ENCODE measurements at regions of chr22 and their contacts with region 1.

Region 1: GRCh38 chr22:25057013-25057881 is 104.7 kb downstream of the KIAA1671 start:
- DNase-seq: peak; percentile 90
- H3K4me3 Mint-ChIP-seq: no peak overlapping the region
- H3K27ac Mint-ChIP-seq: no peak overlapping the region
- H3K4me1 Mint-ChIP-seq: peaks cover 58% of the 10 kb centered on the region
- H3K27me3 Mint-ChIP-seq: peaks cover 3% of the 10 kb centered on the region

Region 2: GRCh38 chr22:24805790-24806662 is 251.2 kb before region 1 on chr22 and contains the start of gene SGSM1:
- CTCF ChIA-PET with region 1: interaction called, 3 read pairs
- POLR2A ChIA-PET with region 1: no interaction called
- intact Hi-C with region 1: loop called (anchors 10 kb)
- DNase-seq: peak; percentile 85
- H3K4me3 Mint-ChIP-seq: peak within 1 kb of the TSS; percentile 66
- H3K27ac Mint-ChIP-seq: no peak within 1 kb of the TSS
- H3K4me1 Mint-ChIP-seq: peaks cover 47% of the 10 kb centered on the region
- H3K27me3 Mint-ChIP-seq: no peaks in the 10 kb centered on the region
- total RNA-seq, gene SGSM1: 0.29 to 0.38 TPM

Region 3: GRCh38 chr22:24994070-24994763 is 63.0 kb before region 1 on chr22:
- CTCF ChIA-PET with region 1: interaction called, 3 read pairs
- POLR2A ChIA-PET with region 1: no interaction called
- intact Hi-C with region 1: loop called (anchors 1 kb)
- DNase-seq: peak; percentile 78
- H3K4me3 Mint-ChIP-seq: no peak overlapping the region
- H3K27ac Mint-ChIP-seq: peak overlapping the region; percentile 56
- H3K4me1 Mint-ChIP-seq: peaks cover 15% of the 10 kb centered on the region
- H3K27me3 Mint-ChIP-seq: peaks cover 26% of the 10 kb centered on the region

Region 4: GRCh38 chr22:25025491-25026400 is 31.5 kb before region 1 on chr22:
- CTCF ChIA-PET with region 1: no interaction called
- POLR2A ChIA-PET with region 1: no interaction called
- intact Hi-C with region 1: no loop called
- DNase-seq: peak; percentile 37
- H3K4me3 Mint-ChIP-seq: no peak overlapping the region
- H3K27ac Mint-ChIP-seq: no peak overlapping the region
- H3K4me1 Mint-ChIP-seq: peaks cover 15% of the 10 kb centered on the region
- H3K27me3 Mint-ChIP-seq: peaks cover 3% of the 10 kb centered on the region

Region 5: GRCh38 chr22:25076336-25076735 is 19.1 kb after region 1 on chr22:
- CTCF ChIA-PET with region 1: interaction called, 40 read pairs
- POLR2A ChIA-PET with region 1: interaction called, 10 read pairs
- intact Hi-C with region 1: loop called (anchors 1 kb)
- DNase-seq: peak; percentile 85
- H3K4me3 Mint-ChIP-seq: peak overlapping the region; percentile 26
- H3K27ac Mint-ChIP-seq: peak overlapping the region; percentile 80
- H3K4me1 Mint-ChIP-seq: peaks cover 65% of the 10 kb centered on the region
- H3K27me3 Mint-ChIP-seq: no peaks in the 10 kb centered on the region

Region 6: DNA sequence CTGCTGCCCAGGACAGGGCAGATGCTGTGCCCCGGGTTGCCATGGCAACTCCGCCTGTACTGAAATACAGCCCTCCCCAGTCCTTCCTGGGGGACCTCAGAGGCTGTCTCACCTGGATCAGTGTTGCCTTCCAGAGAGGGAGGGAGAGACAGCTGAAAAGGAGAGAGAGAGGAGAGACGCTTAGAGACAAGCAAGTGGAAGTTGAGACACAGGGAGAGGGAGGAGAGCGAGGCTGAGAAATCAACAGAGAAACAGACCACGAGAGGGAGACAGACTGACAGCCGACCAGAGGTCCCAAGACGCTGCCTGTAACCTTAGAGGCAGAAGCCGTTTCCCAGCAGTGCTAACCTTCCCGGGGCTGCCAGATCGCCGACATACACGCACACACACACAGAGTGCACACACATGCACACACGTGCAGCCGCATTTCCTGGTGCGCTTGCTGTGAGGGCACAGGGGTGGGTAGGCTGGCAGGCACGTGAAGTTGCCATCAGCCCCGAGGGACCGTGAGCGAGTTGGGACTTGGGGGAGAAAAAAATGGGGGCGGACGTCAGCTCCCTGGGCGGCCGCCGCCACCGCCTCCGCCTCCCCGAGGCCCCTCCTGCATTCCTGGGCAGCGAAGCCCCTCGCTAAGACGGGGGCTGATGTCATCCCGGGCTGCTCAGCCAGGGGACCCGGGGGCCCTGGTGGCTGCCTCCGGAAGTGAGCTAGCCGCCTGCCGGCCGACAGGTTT is 53.8 kb after region 1 on chr22:
- CTCF ChIA-PET with region 1: interaction called, 13 read pairs
- POLR2A ChIA-PET with region 1: interaction called, 3 read pairs
- intact Hi-C with region 1: no loop called
- DNase-seq: peak; percentile 62
- H3K4me3 Mint-ChIP-seq: peak overlapping the region; percentile 70
- H3K27ac Mint-ChIP-seq: no peak overlapping the region
- H3K4me1 Mint-ChIP-seq: peaks cover 10% of the 10 kb centered on the region
- H3K27me3 Mint-ChIP-seq: no peaks in the 10 kb centered on the region

Region 7: GRCh38 chr22:25235547-25236290 is 178.5 kb after region 1 on chr22:
- CTCF ChIA-PET with region 1: no interaction called
- POLR2A ChIA-PET with region 1: no interaction called
- intact Hi-C with region 1: no loop called
- DNase-seq: peak; percentile 83
- H3K4me3 Mint-ChIP-seq: no peak overlapping the region
- H3K27ac Mint-ChIP-seq: no peak overlapping the region
- H3K4me1 Mint-ChIP-seq: peaks cover 4% of the 10 kb centered on the region
- H3K27me3 Mint-ChIP-seq: peaks cover 31% of the 10 kb centered on the region

Region 8: GRCh38 chr22:25736378-25737011 is 679.2 kb after region 1 on chr22:
- CTCF ChIA-PET with region 1: no interaction called
- POLR2A ChIA-PET with region 1: no interaction called
- intact Hi-C with region 1: loop called (anchors 5 kb)
- DNase-seq: peak; percentile 75
- H3K4me3 Mint-ChIP-seq: peak overlapping the region; percentile 24
- H3K27ac Mint-ChIP-seq: peak overlapping the region; percentile 88
- H3K4me1 Mint-ChIP-seq: peaks cover 23% of the 10 kb centered on the region
- H3K27me3 Mint-ChIP-seq: peaks cover 3% of the 10 kb centered on the region

Measured in activated CD4-positive, alpha-beta memory T cell treated with anti-CD3 and anti-CD28 coated beads for 36 hours (primary cell).